Activated naive CD4-positive, alpha-beta T cell treated with anti-CD3 and anti-CD28 coated beads, Interleukin-2, amount 10 ng/mL, durations not matched to agents 7 days and 5 days (primary cell): ENCODE measurements at regions of chr18 and their contacts with region 1.

Region 1: GRCh38 chr18:3585656-3586509 is 135.9 kb downstream of the TGIF1 start:
- DNase-seq: peak; percentile 77
- H3K4me3 Mint-ChIP-seq: no peak overlapping the region
- H3K27ac Mint-ChIP-seq: no peak overlapping the region
- H3K4me1 Mint-ChIP-seq: peaks cover 35% of the 10 kb centered on the region
- H3K27me3 Mint-ChIP-seq: peaks cover 2% of the 10 kb centered on the region

Region 2: DNA sequence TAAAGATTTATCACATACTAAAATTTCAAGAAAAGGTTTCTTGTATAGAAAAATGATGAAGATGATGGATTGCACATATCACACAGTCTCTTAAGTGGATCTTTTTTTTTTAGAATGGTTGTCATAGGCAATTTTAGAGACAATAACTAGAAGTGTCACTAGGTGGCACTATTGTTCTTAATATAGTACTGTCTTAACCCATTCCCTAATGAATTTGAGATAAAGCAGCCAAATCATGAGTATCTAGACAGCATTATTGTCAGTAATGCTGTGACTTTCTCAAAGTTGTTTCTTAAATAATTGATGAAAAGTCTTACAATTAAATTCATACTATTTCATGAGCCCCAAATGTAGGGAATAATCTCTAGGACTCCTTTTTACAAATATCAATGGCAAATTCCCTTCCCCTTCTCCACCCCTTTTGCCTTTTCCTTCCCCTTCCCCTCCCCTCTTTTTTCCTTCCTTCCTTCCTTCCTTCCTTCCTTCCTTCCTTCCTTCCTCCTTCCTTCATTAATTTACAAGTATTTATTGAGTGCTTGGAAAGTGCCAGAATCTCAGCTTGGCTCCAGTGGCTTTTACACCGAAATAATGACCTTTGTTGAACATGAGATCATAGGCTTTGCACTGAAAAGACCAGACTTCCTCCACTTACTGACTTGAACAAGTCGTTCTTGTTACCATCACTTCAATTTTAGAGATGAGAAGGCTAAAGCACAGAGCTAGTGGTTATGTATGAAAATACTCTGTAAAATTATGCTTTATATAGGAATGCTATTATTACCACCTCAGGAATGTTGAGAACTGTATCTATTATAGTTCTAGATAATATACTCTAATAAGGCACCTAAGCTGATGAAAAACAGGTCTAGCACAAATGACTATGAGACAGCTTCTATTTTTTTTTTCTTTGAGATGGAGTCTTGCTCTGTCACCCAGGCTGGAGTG is 304.2 kb before region 1 on chr18:
- CTCF ChIA-PET with region 1: interaction called, 15 read pairs
- DNase-seq: no peak
- H3K4me3 Mint-ChIP-seq: no peak overlapping the region
- H3K27ac Mint-ChIP-seq: no peak overlapping the region
- H3K4me1 Mint-ChIP-seq: no peaks in the 10 kb centered on the region
- H3K27me3 Mint-ChIP-seq: peaks cover 6% of the 10 kb centered on the region

Region 3: GRCh38 chr18:3566851-3567250 is 19.0 kb before region 1 on chr18:
- CTCF ChIA-PET with region 1: no interaction called
- DNase-seq: no peak
- H3K4me3 Mint-ChIP-seq: no peak overlapping the region
- H3K27ac Mint-ChIP-seq: no peak overlapping the region
- H3K4me1 Mint-ChIP-seq: no peaks in the 10 kb centered on the region
- H3K27me3 Mint-ChIP-seq: no peaks in the 10 kb centered on the region

Region 4: GRCh38 chr18:3604498-3605408 is 18.9 kb after region 1 on chr18:
- CTCF ChIA-PET with region 1: interaction called, 13 read pairs
- DNase-seq: peak; percentile 49
- H3K4me3 Mint-ChIP-seq: no peak overlapping the region
- H3K27ac Mint-ChIP-seq: no peak overlapping the region
- H3K4me1 Mint-ChIP-seq: peaks cover 11% of the 10 kb centered on the region
- H3K27me3 Mint-ChIP-seq: no peaks in the 10 kb centered on the region

Region 5: DNA sequence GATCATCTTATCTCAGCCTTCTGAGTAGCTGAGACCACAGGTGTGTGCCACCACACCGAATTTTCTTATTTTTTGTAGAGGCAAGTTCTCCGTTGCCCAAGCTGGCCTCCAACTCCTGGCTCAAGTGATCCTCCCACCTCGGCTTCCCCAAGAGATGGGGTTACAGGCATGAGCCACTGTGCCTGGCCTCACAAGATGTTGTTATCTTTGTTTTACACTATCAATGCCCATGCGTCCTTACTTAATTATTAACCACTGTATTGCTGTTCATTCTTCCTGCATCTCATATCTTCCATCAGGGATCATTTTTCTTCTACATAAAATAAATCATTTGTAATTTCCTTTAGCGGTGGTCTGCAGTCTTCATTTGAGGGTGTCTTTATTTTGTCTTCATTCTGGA is 46.0 kb after region 1 on chr18:
- CTCF ChIA-PET with region 1: no interaction called
- DNase-seq: no peak
- H3K4me3 Mint-ChIP-seq: no peak overlapping the region
- H3K27ac Mint-ChIP-seq: no peak overlapping the region
- H3K4me1 Mint-ChIP-seq: peaks cover 6% of the 10 kb centered on the region
- H3K27me3 Mint-ChIP-seq: peaks cover 3% of the 10 kb centered on the region

Region 6: GRCh38 chr18:3660739-3661515 is 75.0 kb after region 1 on chr18:
- CTCF ChIA-PET with region 1: interaction called, 34 read pairs
- DNase-seq: no peak
- H3K4me3 Mint-ChIP-seq: no peak overlapping the region
- H3K27ac Mint-ChIP-seq: no peak overlapping the region
- H3K4me1 Mint-ChIP-seq: peaks cover 34% of the 10 kb centered on the region
- H3K27me3 Mint-ChIP-seq: no peaks in the 10 kb centered on the region